ENCODE measurements at regions of chr1 and their contacts with region 1.

Region 1: DNA sequence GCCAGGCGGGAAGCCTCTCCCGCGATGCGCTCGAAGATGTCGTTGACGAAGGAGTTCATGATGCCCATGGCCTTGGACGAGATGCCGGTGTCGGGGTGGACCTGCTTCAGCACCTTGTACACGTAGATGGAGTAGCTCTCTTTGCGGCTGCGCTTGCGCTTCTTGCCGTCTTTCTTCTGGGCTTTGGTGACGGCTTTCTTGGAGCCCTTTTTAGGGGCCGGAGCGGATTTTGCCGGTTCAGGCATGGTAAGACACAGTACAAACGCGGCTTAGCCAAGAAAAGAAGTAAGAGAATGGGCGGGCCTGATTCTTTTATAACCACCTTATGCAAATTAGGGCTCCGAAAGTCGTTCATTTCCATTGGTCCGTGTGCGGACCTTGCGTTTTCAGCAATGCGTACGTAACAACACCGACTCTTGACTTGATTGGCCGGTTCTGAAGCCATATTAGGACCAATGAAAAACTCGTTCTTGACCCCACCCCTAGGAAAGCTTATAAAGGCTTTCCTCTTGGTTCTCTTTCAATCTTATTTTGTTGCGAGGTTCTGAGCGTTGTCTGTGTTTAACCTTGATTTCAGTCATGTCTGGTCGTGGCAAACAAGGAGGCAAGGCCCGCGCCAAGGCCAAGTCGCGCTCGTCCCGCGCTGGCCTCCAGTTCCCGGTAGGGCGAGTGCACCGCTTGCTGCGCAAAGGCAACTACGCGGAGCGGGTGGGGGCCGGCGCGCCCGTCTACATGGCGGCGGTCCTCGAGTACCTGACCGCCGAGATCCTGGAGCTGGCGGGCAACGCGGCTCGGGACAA is 12.8 kb upstream of the BOLA1 start:
- DNase-seq: peak; percentile 83 to 98 (median 89)
- ATAC-seq: peak; percentile 80
- H3K4me3 ChIP-seq: peak overlapping the region; percentile 64
- H3K27ac ChIP-seq: peak overlapping the region; percentile 98
- H3K4me1 ChIP-seq: peaks cover 8 to 27% of the 10 kb centered on the region in 2 experiments
- H3K27me3 ChIP-seq: no peaks in the 10 kb centered on the region
- CTCF ChIP-seq: no peak
- EP300 ChIP-seq: peak; percentile 27; the same call in 1 of the 2 replicates
- POLR2A ChIP-seq: peak; percentile 100
- RAD21 ChIP-seq: peak in 1 of 2 experiments; percentile 25; a peak in 1 of 4 replicates

Region 2: DNA sequence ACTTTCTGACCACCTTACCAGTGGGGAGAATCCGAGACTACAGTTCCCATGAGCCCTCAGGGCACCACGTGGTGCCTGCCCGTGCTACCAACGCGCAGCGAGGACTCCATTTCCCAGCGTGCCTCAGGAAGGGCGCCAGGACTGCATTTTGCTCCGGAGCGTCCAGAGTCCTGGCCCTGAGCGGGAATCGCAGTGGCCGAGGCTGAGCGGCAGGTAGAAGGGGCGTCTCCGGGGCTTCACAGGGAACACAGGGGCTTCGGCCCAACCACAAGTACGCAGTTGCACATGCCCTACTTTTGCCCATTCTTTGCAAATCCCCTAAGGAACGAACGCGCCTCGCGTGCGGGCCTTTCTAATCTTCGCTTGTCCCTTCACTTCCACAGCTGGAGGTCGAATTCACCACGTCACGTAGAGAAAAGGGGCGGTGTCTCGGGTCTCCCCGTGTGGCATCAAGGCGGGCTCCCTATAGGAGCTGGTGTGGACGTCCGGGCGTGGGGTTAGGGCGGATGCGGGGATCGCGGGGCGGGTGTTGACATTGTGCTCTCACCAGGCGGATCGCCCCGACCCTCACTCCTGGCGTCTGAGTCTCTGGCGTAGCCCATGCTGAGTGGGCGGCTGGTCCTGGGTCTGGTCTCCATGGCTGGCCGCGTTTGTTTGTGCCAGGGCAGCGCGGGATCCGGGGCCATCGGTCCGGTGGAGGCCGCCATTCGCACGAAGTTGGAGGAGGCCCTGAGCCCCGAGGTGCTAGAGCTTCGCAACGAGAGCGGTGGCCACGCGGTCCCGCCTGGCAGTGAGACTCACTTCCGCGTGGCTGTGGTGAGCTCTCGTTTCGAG is 13.1 kb after region 1 on chr1 and contains the start of gene BOLA1:
- CTCF ChIA-PET with region 1: no interaction called
- POLR2A ChIA-PET with region 1: interaction called, 71 read pairs
- in situ Hi-C with region 1: no loop called
- intact Hi-C with region 1: no loop called
- DNase-seq: no peak
- ATAC-seq: peak; percentile 70
- H3K4me3 ChIP-seq: no peak within 1 kb of the TSS
- H3K27ac ChIP-seq: no peak within 1 kb of the TSS
- H3K4me1 ChIP-seq: peaks cover 0 to 10% of the 10 kb centered on the region in 2 experiments; a peak in 1 of 5 replicates
- H3K27me3 ChIP-seq: no peaks in the 10 kb centered on the region
- CTCF ChIP-seq: no peak
- EP300 ChIP-seq: no peak
- POLR2A ChIP-seq: no peak
- RAD21 ChIP-seq: no peak
- polyA plus RNA-seq, gene BOLA1: not detected

Region 3: GRCh38 chr1:149927503-149928387 is 41.1 kb after region 1 on chr1 and contains the start of gene SF3B4:
- CTCF ChIA-PET with region 1: no interaction called
- POLR2A ChIA-PET with region 1: interaction called, 28 read pairs
- in situ Hi-C with region 1: no loop called
- intact Hi-C with region 1: loop called (anchors 1 kb)
- DNase-seq: peak; percentile 89 to 96 (median 90)
- ATAC-seq: peak; percentile 99
- H3K4me3 ChIP-seq: peak within 1 kb of the TSS; percentile 93
- H3K27ac ChIP-seq: peak within 1 kb of the TSS; percentile 73
- H3K4me1 ChIP-seq: peaks cover 22 to 23% of the 10 kb centered on the region in 2 experiments
- H3K27me3 ChIP-seq: no peaks in the 10 kb centered on the region
- CTCF ChIP-seq: no peak
- EP300 ChIP-seq: no peak
- POLR2A ChIP-seq: peak; percentile 95
- RAD21 ChIP-seq: no peak
- polyA plus RNA-seq, gene SF3B4: 3.0 to 8.3 TPM

Region 4: DNA sequence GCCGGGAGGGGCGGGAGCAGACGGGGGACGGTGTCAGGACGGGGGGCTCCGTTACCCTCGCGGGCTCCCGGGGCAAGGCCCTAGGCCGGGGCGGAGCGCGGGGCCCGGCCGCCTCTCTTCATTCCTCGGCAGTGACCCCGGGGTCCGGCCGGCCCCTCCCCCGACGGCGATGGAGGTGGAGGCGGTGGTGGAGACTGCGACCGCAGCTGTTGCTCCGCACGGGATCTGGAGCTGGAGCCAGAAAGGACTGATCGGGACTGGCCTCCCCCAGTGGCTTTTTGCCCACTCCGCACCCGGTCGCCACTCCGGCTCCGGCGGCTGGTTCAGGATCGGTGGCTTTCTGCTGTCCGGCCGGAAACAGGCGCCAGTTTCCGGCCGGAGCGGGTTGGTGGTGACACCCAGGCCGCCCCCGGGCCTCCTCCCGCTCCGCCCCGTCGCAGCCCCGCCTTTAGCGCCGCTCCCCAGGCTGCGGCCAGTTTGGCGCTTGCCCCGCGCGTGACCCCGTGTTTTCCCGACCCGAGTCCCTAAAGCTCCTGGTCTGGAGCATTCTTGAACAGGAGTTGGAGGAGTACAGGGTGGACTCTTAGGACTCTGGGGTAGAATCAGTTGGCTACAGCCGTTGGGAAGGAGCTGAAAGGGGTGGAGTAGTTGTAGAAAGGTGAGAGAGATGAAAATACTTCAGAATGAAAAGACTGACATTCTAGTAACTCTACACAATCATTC is 124.0 kb after region 1 on chr1 and contains the start of gene OTUD7B:
- CTCF ChIA-PET with region 1: no interaction called
- POLR2A ChIA-PET with region 1: interaction called, 37 read pairs
- in situ Hi-C with region 1: no loop called
- intact Hi-C with region 1: no loop called
- DNase-seq: peak; percentile 89 to 95 (median 92)
- ATAC-seq: peak; percentile 84
- H3K4me3 ChIP-seq: peak within 1 kb of the TSS; percentile 81
- H3K27ac ChIP-seq: peak within 1 kb of the TSS; percentile 90
- H3K4me1 ChIP-seq: peaks cover 0 to 44% of the 10 kb centered on the region in 2 experiments; a peak in 3 of 5 replicates
- H3K27me3 ChIP-seq: no peaks in the 10 kb centered on the region
- CTCF ChIP-seq: no peak; a peak in 2 of 6 replicates
- EP300 ChIP-seq: peak; percentile 67
- POLR2A ChIP-seq: peak; percentile 80
- RAD21 ChIP-seq: no peak
- polyA plus RNA-seq, gene OTUD7B: 0.96 TPM

Region 5: GRCh38 chr1:150162862-150163706 is 276.5 kb after region 1 on chr1:
- CTCF ChIA-PET with region 1: interaction called, 3 read pairs
- POLR2A ChIA-PET with region 1: interaction called, 40 read pairs
- in situ Hi-C with region 1: no loop called
- intact Hi-C with region 1: loop called (anchors 10 kb)
- DNase-seq: peak; percentile 83 to 95 (median 89)
- ATAC-seq: peak; percentile 93
- H3K4me3 ChIP-seq: peak overlapping the region; percentile 7; the same call in 1 of the 2 replicates
- H3K27ac ChIP-seq: peak overlapping the region; percentile 95
- H3K4me1 ChIP-seq: peaks cover 27 to 53% of the 10 kb centered on the region in 2 experiments
- H3K27me3 ChIP-seq: no peaks in the 10 kb centered on the region
- CTCF ChIP-seq: no peak
- EP300 ChIP-seq: peak; percentile 82
- POLR2A ChIP-seq: peak; percentile 83
- RAD21 ChIP-seq: 0 out of 4 replicates have a peak, but pooled peaks of 1 of the 2 experiments have one; percentile 13

Measured in K562 (cell line).